ENCODE measurements at regions of chr3 and their contacts with region 1.

Region 1: DNA sequence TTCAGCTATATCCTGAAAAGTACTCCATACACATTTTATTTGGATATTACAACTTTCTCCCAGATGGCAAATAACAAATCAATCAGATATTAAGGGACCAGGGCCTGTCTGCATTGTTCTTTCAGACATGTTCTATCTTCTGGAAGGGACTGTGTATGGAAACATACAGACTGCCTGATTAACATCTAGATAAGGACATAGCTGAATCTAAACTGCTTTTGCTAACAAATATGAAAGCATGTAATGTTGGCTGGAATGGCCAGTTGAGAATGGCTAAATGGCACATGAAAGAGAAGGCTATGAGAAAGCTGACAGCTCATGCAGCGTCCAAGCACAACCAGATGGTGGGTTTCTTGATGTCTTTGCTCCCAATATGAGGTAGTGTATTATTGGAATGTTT is 149.4 kb downstream of the CFAP20DC start:
- DNase-seq: no peak
- ATAC-seq: no peak
- H3K4me3 Mint-ChIP-seq: no peak overlapping the region
- H3K27ac Mint-ChIP-seq: no peak overlapping the region
- H3K4me1 Mint-ChIP-seq: peaks cover 20% of the 10 kb centered on the region
- H3K27me3 Mint-ChIP-seq: peaks cover 2% of the 10 kb centered on the region

Region 2: GRCh38 chr3:58884453-58884852 is 15.9 kb before region 1 on chr3:
- CTCF ChIA-PET with region 1: interaction called, 3 read pairs
- POLR2A ChIA-PET with region 1: interaction called, 17 read pairs
- intact Hi-C with region 1: no loop called
- DNase-seq: no peak
- ATAC-seq: no peak
- H3K4me3 Mint-ChIP-seq: no peak overlapping the region
- H3K27ac Mint-ChIP-seq: no peak overlapping the region
- H3K4me1 Mint-ChIP-seq: no peaks in the 10 kb centered on the region
- H3K27me3 Mint-ChIP-seq: peaks cover 6% of the 10 kb centered on the region

Measured in activated CD4-positive, alpha-beta T cell treated with anti-CD3 and anti-CD28 coated beads for 36 hours (primary cell).